Activated T-helper 1 cell treated with anti-CD3 and anti-CD28 coated beads, Interleukin-12 subunit alpha, Interleukin-12 subunit beta, Interleukin-2, Interleukin-4 antibody, amounts not matched to agents 30 ng/mL and 10 ng/mL and 1 ng/mL, durations not matched to agents 14 hours and 24 hours and 36 hours (primary cell): ENCODE measurements at regions of chr6 and their contacts with region 1.

Region 1: GRCh38 chr6:11414176-11414963 is 123.2 kb upstream of the TMEM170B start:
- DNase-seq: no peak
- H3K4me3 Mint-ChIP-seq: peak overlapping the region; percentile 7
- H3K27ac Mint-ChIP-seq: peak overlapping the region; percentile 49
- H3K4me1 Mint-ChIP-seq: peaks cover 77% of the 10 kb centered on the region
- H3K27me3 Mint-ChIP-seq: no peaks in the 10 kb centered on the region

Region 2: DNA sequence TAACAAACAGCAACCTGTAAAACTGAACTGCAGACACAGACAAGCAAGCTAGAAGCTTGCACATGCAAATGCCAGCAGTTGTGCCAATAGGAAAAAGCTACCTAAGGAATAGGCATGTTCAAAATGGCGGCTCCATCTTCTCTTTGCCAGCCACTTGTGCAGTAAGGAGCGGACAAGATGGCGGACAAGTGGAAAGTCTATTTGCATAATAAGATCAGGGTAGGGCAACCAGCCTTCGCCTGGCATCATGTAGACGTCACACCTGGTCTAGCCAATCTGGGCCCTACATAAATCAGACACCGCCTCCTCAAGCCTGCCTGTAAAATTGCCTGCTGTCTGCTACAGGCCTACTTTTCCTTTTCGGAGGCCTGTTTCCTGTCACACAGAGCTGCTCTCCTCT is 738.0 kb before region 1 on chr6:
- intact Hi-C with region 1: no loop called
- DNase-seq: no peak
- H3K4me3 Mint-ChIP-seq: no peak overlapping the region
- H3K27ac Mint-ChIP-seq: no peak overlapping the region
- H3K4me1 Mint-ChIP-seq: no peaks in the 10 kb centered on the region
- H3K27me3 Mint-ChIP-seq: peaks cover 2% of the 10 kb centered on the region

Region 3: GRCh38 chr6:11064836-11065235 is 349.5 kb before region 1 on chr6:
- intact Hi-C with region 1: no loop called
- DNase-seq: no peak
- H3K4me3 Mint-ChIP-seq: no peak overlapping the region
- H3K27ac Mint-ChIP-seq: no peak overlapping the region
- H3K4me1 Mint-ChIP-seq: no peaks in the 10 kb centered on the region
- H3K27me3 Mint-ChIP-seq: peaks cover 12% of the 10 kb centered on the region

Region 4: DNA sequence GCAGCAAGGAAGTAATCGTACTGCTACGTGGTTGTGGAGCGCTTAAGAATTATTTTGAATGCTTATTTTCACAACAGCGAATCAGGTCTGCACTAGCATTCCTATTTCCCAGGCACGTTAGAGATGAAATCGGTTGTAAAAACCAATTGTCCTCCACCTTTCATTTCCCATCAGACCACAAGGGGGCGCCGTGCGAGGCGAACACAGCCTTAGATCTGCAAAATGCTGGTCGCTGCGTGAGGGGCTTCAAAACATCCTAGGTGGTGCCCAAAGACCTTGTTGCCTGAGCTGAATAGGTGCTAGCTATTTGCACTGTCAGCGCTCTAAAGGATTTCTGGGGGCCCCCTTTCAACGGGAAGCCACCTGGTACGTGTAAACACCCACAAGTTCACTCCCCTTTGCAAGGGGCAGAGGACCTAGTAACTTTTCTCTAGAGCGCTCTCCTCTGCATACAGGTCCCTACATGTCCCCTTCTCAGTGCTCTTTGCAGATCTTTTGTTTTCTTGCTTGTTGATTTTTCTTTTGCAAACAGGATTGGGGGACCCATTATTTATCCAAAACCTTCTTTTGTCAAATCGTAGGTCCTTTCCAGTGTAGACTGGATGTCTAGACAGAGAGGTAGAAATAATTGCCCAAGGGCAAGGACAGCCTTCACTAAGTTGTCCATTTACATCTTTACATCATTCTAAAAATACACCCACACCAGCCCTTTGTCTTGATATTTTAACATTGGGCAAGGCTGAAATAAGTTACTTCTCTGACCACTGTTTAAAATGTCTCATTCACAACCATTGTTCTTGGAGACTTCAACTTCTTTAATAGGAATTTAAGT is 241.7 kb before region 1 on chr6:
- intact Hi-C with region 1: loop called (anchors 5 kb)
- DNase-seq: peak; percentile 47
- H3K4me3 Mint-ChIP-seq: no peak overlapping the region
- H3K27ac Mint-ChIP-seq: no peak overlapping the region
- H3K4me1 Mint-ChIP-seq: peaks cover 25% of the 10 kb centered on the region
- H3K27me3 Mint-ChIP-seq: peaks cover 3% of the 10 kb centered on the region

Region 5: GRCh38 chr6:11275598-11275997 is 138.8 kb before region 1 on chr6:
- intact Hi-C with region 1: loop called (anchors 2 kb)
- DNase-seq: no peak
- H3K4me3 Mint-ChIP-seq: peak overlapping the region; percentile 0
- H3K27ac Mint-ChIP-seq: peak overlapping the region; percentile 41
- H3K4me1 Mint-ChIP-seq: peaks cover 43% of the 10 kb centered on the region
- H3K27me3 Mint-ChIP-seq: no peaks in the 10 kb centered on the region

Region 6: GRCh38 chr6:11366183-11366933 is 48.0 kb before region 1 on chr6:
- intact Hi-C with region 1: loop called (anchors 2 kb)
- DNase-seq: peak; percentile 60
- H3K4me3 Mint-ChIP-seq: peak overlapping the region; percentile 55
- H3K27ac Mint-ChIP-seq: peak overlapping the region; percentile 92
- H3K4me1 Mint-ChIP-seq: peaks cover 95% of the 10 kb centered on the region
- H3K27me3 Mint-ChIP-seq: no peaks in the 10 kb centered on the region

Region 7: GRCh38 chr6:11424395-11425050 is 10.2 kb after region 1 on chr6:
- intact Hi-C with region 1: loop called (anchors 1 kb)
- DNase-seq: no peak
- H3K4me3 Mint-ChIP-seq: no peak overlapping the region
- H3K27ac Mint-ChIP-seq: peak overlapping the region; percentile 7
- H3K4me1 Mint-ChIP-seq: peaks cover 63% of the 10 kb centered on the region
- H3K27me3 Mint-ChIP-seq: no peaks in the 10 kb centered on the region

Region 8: GRCh38 chr6:11434565-11435326 is 20.4 kb after region 1 on chr6:
- intact Hi-C with region 1: no loop called
- DNase-seq: no peak
- H3K4me3 Mint-ChIP-seq: no peak overlapping the region
- H3K27ac Mint-ChIP-seq: no peak overlapping the region
- H3K4me1 Mint-ChIP-seq: peaks cover 34% of the 10 kb centered on the region
- H3K27me3 Mint-ChIP-seq: no peaks in the 10 kb centered on the region

Region 9: DNA sequence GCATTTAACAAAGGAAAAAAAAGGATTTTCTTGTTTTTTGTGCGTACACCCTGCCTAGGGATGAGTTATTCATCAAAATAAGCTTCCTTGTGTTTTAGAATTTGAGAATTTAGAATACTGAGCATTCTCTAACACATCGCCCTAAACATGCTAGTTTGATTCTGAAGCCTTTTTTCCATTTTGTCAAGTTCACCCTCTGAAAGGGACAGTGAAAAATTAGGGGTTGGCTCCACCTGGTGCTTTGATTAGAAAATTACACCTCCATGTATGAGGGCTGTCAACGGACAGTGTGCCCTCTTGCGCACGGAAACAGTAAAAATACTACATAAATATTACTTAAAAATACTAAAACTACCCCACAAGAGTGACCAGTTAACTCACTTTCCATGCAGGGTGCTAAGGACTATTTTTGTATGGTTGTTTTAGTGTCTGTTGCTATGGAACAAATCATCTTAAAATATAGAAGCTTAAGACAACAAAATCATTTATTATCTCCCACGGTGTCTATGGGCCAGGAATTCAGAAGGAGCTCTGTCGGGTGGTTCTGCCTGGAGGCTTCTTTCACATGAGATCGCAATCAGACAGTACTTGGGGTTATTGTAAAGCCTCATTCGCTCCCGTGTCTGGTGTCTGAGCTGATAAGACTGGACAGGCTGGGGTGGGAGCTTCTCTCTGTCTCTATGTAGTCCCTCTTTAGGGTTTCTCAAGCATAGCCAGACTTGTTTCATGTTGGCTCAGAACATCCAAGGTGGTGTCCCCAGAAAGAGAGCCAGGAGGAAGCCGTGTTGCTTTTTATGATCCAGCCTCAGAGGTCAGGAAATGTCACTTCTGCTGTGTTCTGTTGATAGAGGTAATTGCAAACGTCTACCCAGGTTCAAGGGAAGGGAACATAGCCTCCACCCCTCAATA is 82.0 kb after region 1 on chr6:
- intact Hi-C with region 1: loop called (anchors 5 kb)
- DNase-seq: peak; percentile 72
- H3K4me3 Mint-ChIP-seq: no peak overlapping the region
- H3K27ac Mint-ChIP-seq: no peak overlapping the region
- H3K4me1 Mint-ChIP-seq: peaks cover 26% of the 10 kb centered on the region
- H3K27me3 Mint-ChIP-seq: peaks cover 3% of the 10 kb centered on the region